ENCODE measurements at regions of chr4 and their contacts with region 1.

Region 1: GRCh38 chr4:1047121-1047985 is 35.9 kb downstream of the FGFRL1 start:
- DNase-seq: peak in 1 of 9 experiments; percentile 18
- ATAC-seq: no peak
- H3K4me3 ChIP-seq: no peak overlapping the region
- H3K4me3 Mint-ChIP-seq: no peak overlapping the region
- H3K27ac ChIP-seq: no peak overlapping the region
- H3K27ac Mint-ChIP-seq: no peak overlapping the region
- H3K4me1 ChIP-seq: no peaks in the 10 kb centered on the region
- H3K4me1 Mint-ChIP-seq: peaks cover 2% of the 10 kb centered on the region
- H3K27me3 ChIP-seq: peaks cover 0 to 10% of the 10 kb centered on the region in 2 experiments
- H3K27me3 Mint-ChIP-seq: peaks cover 35% of the 10 kb centered on the region
- CTCF ChIP-seq: no peak

Region 2: GRCh38 chr4:663438-664428 is 383.6 kb before region 1 on chr4:
- CTCF ChIA-PET with region 1: no interaction called
- POLR2A ChIA-PET with region 1: no interaction called
- intact Hi-C with region 1: no loop called
- DNase-seq: peak; percentile 64 to 87 (median 81)
- ATAC-seq: peak; percentile 94
- H3K4me3 ChIP-seq: peak overlapping the region; percentile 72 to 93
- H3K4me3 Mint-ChIP-seq: peak overlapping the region; percentile 83
- H3K27ac ChIP-seq: peak overlapping the region; percentile 74 to 81
- H3K27ac Mint-ChIP-seq: peak overlapping the region; percentile 92
- H3K4me1 ChIP-seq: peaks cover 19% of the 10 kb centered on the region
- H3K4me1 Mint-ChIP-seq: peaks cover 17% of the 10 kb centered on the region
- H3K27me3 ChIP-seq: no peaks in the 10 kb centered on the region
- H3K27me3 Mint-ChIP-seq: no peaks in the 10 kb centered on the region
- CTCF ChIP-seq: no peak

Region 3: GRCh38 chr4:1019729-1020470 is 27.5 kb before region 1 on chr4:
- CTCF ChIA-PET with region 1: no interaction called
- POLR2A ChIA-PET with region 1: no interaction called
- intact Hi-C with region 1: loop called in 1 of 2 experiments (anchors 1 kb)
- DNase-seq: no peak
- ATAC-seq: no peak
- H3K4me3 ChIP-seq: no peak overlapping the region
- H3K4me3 Mint-ChIP-seq: no peak overlapping the region
- H3K27ac ChIP-seq: no peak overlapping the region
- H3K27ac Mint-ChIP-seq: no peak overlapping the region
- H3K4me1 ChIP-seq: no peaks in the 10 kb centered on the region
- H3K4me1 Mint-ChIP-seq: no peaks in the 10 kb centered on the region
- H3K27me3 ChIP-seq: no peaks in the 10 kb centered on the region
- H3K27me3 Mint-ChIP-seq: no peaks in the 10 kb centered on the region
- CTCF ChIP-seq: no peak

Region 4: DNA sequence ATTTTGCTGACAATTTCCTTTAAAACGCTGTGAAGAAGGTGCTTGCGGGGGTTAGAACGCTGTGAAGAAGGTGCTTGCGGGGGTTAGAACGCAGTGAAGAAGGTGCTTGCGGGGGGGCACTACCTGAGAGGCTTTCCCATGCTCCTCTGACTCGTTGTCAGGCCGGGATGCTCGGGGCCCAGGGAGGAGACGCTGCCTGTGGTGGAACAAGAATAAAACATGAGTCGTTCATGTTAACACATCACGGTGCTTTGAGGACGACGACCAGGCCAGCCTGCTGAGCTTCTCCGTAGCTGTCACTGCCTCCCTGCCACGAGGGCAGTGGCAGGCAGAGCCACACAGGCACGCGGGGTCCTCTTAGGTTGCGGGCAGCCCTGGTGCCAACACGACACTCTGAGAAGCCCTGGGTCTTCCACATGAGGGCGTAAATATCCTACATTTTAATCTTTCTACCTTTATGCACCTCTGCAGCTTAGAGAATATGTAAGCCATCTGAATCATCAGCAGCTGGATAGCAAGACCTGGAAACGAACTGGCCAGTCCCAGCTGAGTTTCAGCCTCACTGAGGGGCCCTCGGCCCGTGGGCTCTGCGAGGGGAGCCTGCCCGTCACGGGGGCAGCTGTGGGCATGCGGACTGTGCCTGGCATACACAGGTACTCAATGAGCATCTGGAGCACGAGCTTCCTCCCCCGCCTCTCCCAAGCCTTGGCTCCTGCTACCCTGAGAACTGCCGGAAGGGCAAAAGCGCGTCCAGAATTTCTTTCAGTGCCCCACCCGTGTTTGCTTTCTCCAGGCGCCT is 11.0 kb after region 1 on chr4:
- CTCF ChIA-PET with region 1: no interaction called
- POLR2A ChIA-PET with region 1: no interaction called
- intact Hi-C with region 1: no loop called
- DNase-seq: peak in 1 of 9 experiments; percentile 11
- ATAC-seq: no peak
- H3K4me3 ChIP-seq: no peak overlapping the region
- H3K4me3 Mint-ChIP-seq: no peak overlapping the region
- H3K27ac ChIP-seq: no peak overlapping the region
- H3K27ac Mint-ChIP-seq: no peak overlapping the region
- H3K4me1 ChIP-seq: peaks cover 16% of the 10 kb centered on the region
- H3K4me1 Mint-ChIP-seq: peaks cover 16% of the 10 kb centered on the region
- H3K27me3 ChIP-seq: no peaks in the 10 kb centered on the region
- H3K27me3 Mint-ChIP-seq: peaks cover 10% of the 10 kb centered on the region
- CTCF ChIP-seq: no peak